RWPE1 (cell line): ENCODE measurements at regions of chr4 and their contacts with region 1.

Region 1: GRCh38 chr4:74311696-74312313 is 3.5 kb downstream of the EPGN start:
- DNase-seq: peak; percentile 32
- H3K27ac ChIP-seq: no peak overlapping the region
- CTCF ChIP-seq: peak; percentile 78

Region 2: GRCh38 chr4:74189331-74190043 is 122.3 kb before region 1 on chr4:
- CTCF ChIA-PET with region 1: interaction called, 11 read pairs
- POLR2A ChIA-PET with region 1: no interaction called
- DNase-seq: peak; percentile 46
- H3K27ac ChIP-seq: no peak overlapping the region
- CTCF ChIP-seq: peak; percentile 85

Region 3: DNA sequence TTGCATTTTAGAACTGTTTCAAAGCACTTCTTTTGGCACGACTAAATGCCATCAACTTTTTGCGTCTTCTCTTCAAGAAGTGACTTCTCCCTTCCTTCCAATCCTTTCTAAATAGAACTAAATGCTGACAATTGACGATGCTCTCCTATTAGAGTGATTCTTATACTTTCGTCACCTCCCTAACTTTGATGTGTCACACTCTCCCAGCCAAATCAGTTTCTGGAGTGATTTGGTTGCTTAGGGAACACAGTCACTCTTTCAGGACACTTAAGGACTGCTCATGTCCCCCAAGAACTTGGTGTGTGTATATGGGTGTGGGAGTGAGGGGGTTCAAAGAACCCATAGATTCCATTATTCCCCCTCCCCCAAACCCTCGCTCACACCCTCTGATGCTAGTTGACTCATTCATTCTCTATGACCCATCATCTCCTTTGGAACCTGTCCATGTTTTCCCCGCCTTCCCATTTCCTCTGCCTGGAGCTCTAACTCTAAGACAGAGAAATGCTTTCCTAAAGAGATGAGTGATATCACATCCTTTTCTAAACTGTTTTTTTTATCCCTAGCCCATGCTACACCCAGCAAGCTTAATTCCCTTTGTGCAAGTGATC is 106.4 kb after region 1 on chr4:
- CTCF ChIA-PET with region 1: no interaction called
- POLR2A ChIA-PET with region 1: no interaction called
- DNase-seq: peak; percentile 82
- H3K27ac ChIP-seq: peak overlapping the region; percentile 22; the same call in 1 of the 2 replicates
- CTCF ChIP-seq: no peak

Region 4: GRCh38 chr4:74632634-74633033 is 320.8 kb after region 1 on chr4:
- CTCF ChIA-PET with region 1: no interaction called
- POLR2A ChIA-PET with region 1: no interaction called
- DNase-seq: peak; percentile 88
- H3K27ac ChIP-seq: no peak overlapping the region
- CTCF ChIP-seq: no peak